CD14-positive monocyte (primary cell): ENCODE measurements at regions of chr14 and their contacts with region 1.

Region 1: GRCh38 chr14:20855652-20856291 is 35.4 kb upstream of the RNASE3 start:
- DNase-seq: peak; percentile 67 to 86 (median 79)
- H3K4me3 ChIP-seq: no peak overlapping the region
- H3K4me3 Mint-ChIP-seq: no peak overlapping the region
- H3K27ac ChIP-seq: no peak overlapping the region
- H3K27ac Mint-ChIP-seq: peak overlapping the region in 1 of 7 donors; percentile 32
- H3K4me1 ChIP-seq: peaks cover 4 to 6% of the 10 kb centered on the region in 2 donors
- H3K4me1 Mint-ChIP-seq: peaks cover 11% of the 10 kb centered on the region
- H3K27me3 ChIP-seq: no peaks in the 10 kb centered on the region
- H3K27me3 Mint-ChIP-seq: peaks cover 0 to 2% (median 0%) of the 10 kb centered on the region in 3 donors
- CTCF ChIP-seq: peak; percentile 84

Region 2: GRCh38 chr14:20697273-20698017 is 158.3 kb before region 1 on chr14:
- intact Hi-C with region 1: loop called (anchors 1 to 2 kb)
- DNase-seq: peak; percentile 78 to 86 (median 83)
- H3K4me3 ChIP-seq: no peak overlapping the region
- H3K4me3 Mint-ChIP-seq: no peak overlapping the region
- H3K27ac ChIP-seq: peak overlapping the region in 1 of 2 donors; percentile 28
- H3K27ac Mint-ChIP-seq: peak overlapping the region in 4 of 7 donors; percentile 21 to 78 (median 40)
- H3K4me1 ChIP-seq: peaks cover 12 to 16% of the 10 kb centered on the region in 2 donors
- H3K4me1 Mint-ChIP-seq: peaks cover 14% of the 10 kb centered on the region
- H3K27me3 ChIP-seq: no peaks in the 10 kb centered on the region
- H3K27me3 Mint-ChIP-seq: no peaks in the 10 kb centered on the region
- CTCF ChIP-seq: peak; percentile 86

Region 3: DNA sequence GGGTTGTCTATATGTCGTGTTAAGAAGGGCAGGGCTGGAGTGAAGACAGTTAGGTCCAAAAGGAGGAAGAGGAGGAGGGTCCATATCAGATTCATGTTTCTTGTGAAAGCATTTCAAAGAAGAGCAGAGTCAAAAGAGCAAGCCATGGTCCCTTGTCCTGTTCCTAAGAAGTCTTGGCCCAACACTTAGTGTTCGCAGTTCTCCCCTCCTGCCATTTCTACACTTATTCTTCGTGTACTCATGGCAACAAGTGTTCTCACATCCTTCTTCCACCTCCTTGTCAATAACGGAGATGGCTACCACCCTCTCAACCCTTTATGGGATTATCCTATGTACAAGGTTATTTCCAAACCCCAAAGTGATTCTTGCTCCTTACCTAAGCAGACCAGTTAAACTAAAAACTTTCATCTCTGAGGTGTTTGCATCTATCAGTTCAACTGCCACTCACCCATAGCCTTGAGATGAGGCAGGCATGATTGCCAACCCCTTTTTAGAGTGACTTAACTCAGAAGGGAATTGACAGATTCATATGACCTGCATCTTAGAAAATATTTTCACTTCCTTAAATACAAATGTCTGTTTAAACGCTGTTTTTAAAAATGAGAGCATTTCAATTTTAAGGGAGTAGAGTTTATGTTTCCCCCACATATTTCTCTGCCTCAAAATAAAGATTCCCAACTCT is 79.7 kb after region 1 on chr14:
- intact Hi-C with region 1: no loop called
- DNase-seq: peak; percentile 25 to 53 (median 33)
- H3K4me3 ChIP-seq: peak overlapping the region in 1 of 3 experiments; percentile 6
- H3K4me3 Mint-ChIP-seq: no peak overlapping the region
- H3K27ac ChIP-seq: no peak overlapping the region
- H3K27ac Mint-ChIP-seq: peak overlapping the region in 6 of 7 donors; percentile 32 to 81 (median 52)
- H3K4me1 ChIP-seq: peaks cover 41 to 47% of the 10 kb centered on the region in 2 donors
- H3K4me1 Mint-ChIP-seq: peaks cover 48% of the 10 kb centered on the region
- H3K27me3 ChIP-seq: no peaks in the 10 kb centered on the region
- H3K27me3 Mint-ChIP-seq: no peaks in the 10 kb centered on the region
- CTCF ChIP-seq: no peak